Posterior cingulate gyrus (tissue), 11 donors: ENCODE measurements at regions of chr12 and their contacts with region 1.

Region 1: GRCh38 chr12:55996715-55997534 is at the start of gene SUOX:
- DNase-seq: peak; percentile 94 to 100 (median 98)

Region 2: DNA sequence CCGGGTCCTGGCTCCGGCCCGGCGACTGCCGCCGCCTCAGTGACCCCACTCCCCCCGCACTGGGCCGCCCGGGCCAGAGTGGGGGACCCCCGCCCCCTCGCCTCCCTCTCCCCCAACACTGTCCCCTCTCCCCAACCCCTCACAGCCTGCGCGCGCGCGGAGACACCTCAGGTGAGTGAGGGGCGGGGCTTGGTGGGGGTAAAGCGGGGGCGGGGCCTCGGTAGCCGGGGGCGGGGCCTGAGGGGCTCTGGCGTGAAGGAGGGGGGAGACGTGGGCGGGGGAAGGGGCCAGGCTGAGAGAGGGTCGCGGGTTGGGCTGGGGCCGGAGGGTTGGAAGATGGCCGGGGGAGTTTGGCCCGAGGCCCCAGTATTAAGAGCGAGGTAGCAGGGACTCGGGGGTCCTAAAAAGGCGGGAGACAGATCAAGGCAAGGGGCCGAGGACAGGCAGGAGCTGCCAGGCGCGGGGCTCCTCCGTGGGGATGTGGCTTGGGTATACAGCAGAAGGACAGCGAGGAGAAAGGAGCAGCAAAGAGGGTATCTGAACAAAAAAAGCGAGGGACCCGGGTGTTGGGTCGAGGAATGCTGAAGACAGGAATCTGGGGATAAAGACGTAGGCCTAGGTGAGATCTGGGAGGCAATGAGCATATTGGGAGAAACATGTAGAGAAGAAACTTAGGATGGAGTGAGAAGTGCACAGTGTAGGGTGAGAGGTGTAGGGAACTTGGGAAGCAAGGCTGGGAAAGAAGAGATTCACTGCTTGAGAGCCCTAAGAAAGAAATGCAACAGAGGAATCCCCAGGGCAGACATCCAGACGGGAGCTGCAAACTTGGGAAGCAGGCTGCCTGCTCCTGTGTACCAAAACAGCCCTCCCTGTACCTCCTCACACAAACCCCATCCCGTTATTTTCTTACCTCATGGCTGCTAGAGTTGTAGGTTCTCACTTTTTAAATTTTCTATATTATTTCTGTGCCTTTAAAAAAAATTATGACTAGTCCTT is 10.9 kb after region 1 on chr12:
- intact Hi-C with region 1: loop called (anchors 1 kb)
- DNase-seq: peak in 8 of 10 donors; percentile 15 to 88 (median 42)

Region 3: DNA sequence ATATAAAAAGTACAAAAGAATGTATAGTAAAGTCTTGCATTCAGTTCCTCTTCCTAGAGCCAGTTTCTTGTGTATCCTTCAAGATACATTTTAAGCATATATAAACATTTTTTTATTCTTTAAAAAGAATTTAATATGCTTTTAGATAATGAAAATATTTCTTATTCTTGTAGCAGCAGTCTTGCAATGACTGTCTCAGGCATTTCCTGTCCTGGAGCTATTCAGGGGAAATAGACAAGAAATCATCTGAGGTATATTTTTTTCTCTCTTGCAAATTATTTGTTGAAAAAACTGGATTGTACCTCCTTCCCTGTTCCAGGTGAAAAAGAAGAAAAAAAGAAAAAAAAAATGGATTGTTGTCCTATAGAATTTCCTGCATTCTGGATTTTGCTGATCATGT is 66.1 kb after region 1 on chr12:
- intact Hi-C with region 1: no loop called
- DNase-seq: no peak

Region 4: GRCh38 chr12:56078990-56079664 is 82.2 kb after region 1 on chr12:
- intact Hi-C with region 1: no loop called
- DNase-seq: peak; percentile 73 to 97 (median 84)